ENCODE measurements at regions of chr6 and their contacts with region 1.

Region 1: GRCh38 chr6:85678602-85679444 is 36.1 kb upstream of the SYNCRIP start:
- DNase-seq: peak; percentile 99
- H3K4me3 ChIP-seq: peak overlapping the region; percentile 87 to 99 (median 96)
- H3K27ac ChIP-seq: peak overlapping the region; percentile 72
- H3K4me1 ChIP-seq: peaks cover 29% of the 10 kb centered on the region
- H3K27me3 ChIP-seq: no peaks in the 10 kb centered on the region
- CTCF ChIP-seq: peak in 1 of 2 donors; percentile 9
- POLR2A ChIP-seq: peak; percentile 100

Region 2: DNA sequence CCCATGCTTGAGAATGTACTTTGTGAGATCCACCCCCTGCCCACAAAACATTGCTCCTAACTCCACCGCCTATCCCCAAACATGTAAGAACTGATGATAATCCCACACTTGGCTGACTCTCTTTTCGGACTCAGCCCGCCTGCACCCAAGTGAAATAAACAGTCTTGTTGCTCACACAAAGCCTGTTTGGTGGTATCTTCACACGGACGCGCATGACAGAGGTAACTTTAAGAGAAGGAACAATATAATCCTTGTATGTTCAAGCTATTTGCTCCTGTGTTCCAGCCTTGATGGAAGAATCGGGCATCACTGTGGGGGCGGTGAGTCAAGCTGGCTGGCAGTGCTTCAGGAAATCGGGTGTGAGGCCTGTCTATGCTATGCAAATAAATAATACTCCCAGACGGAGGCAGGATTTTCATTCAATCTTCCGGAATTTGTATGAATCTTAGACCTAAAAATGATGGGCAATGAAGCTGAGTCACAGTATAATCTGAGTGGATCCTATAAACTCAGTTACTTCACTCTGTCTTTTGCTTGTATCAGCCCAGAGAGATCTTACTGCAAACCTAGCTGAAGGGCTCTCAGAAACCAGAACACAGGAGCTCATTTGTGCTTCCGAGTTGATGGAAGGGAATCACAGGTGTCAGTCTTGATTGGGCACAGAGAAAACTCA is 274.2 kb before region 1 on chr6:
- CTCF ChIA-PET with region 1: no interaction called
- POLR2A ChIA-PET with region 1: interaction called, 3 read pairs
- dilution Hi-C with region 1: no loop called
- intact Hi-C with region 1: loop called (anchors 1 kb)
- DNase-seq: peak; percentile 93
- H3K4me3 ChIP-seq: peak overlapping the region in 1 of 3 experiments; percentile 14
- H3K27ac ChIP-seq: peak overlapping the region; percentile 94
- H3K4me1 ChIP-seq: peaks cover 55% of the 10 kb centered on the region
- H3K27me3 ChIP-seq: no peaks in the 10 kb centered on the region
- CTCF ChIP-seq: no peak
- POLR2A ChIP-seq: peak; percentile 43

Region 3: GRCh38 chr6:85593438-85594196 is 85.2 kb before region 1 on chr6 and contains the start of gene SNX14:
- CTCF ChIA-PET with region 1: no interaction called
- POLR2A ChIA-PET with region 1: interaction called, 21 read pairs
- dilution Hi-C with region 1: no loop called
- intact Hi-C with region 1: loop called (anchors 2 kb)
- DNase-seq: peak; percentile 97
- H3K4me3 ChIP-seq: peak within 1 kb of the TSS; percentile 80 to 96 (median 92)
- H3K27ac ChIP-seq: peak within 1 kb of the TSS; percentile 82
- H3K4me1 ChIP-seq: peaks cover 16% of the 10 kb centered on the region
- H3K27me3 ChIP-seq: no peaks in the 10 kb centered on the region
- CTCF ChIP-seq: peak in 1 of 2 donors; percentile 2
- POLR2A ChIP-seq: peak; percentile 61
- total RNA-seq, gene SNX14: 64.9 and 74.3 TPM in 2 replicates

Region 4: GRCh38 chr6:85628353-85628752 is 50.5 kb before region 1 on chr6:
- CTCF ChIA-PET with region 1: no interaction called
- POLR2A ChIA-PET with region 1: interaction called, 31 read pairs
- dilution Hi-C with region 1: no loop called
- intact Hi-C with region 1: loop called (anchors 10 kb)
- DNase-seq: no peak
- H3K4me3 ChIP-seq: no peak overlapping the region
- H3K27ac ChIP-seq: no peak overlapping the region
- H3K4me1 ChIP-seq: no peaks in the 10 kb centered on the region
- H3K27me3 ChIP-seq: no peaks in the 10 kb centered on the region
- CTCF ChIP-seq: no peak
- POLR2A ChIP-seq: no peak

Region 5: GRCh38 chr6:85650606-85651005 is 28.2 kb before region 1 on chr6:
- CTCF ChIA-PET with region 1: interaction called, 78 read pairs
- POLR2A ChIA-PET with region 1: interaction called, 372 read pairs
- dilution Hi-C with region 1: no loop called
- intact Hi-C with region 1: no loop called
- DNase-seq: no peak
- H3K4me3 ChIP-seq: no peak overlapping the region
- H3K27ac ChIP-seq: no peak overlapping the region
- H3K4me1 ChIP-seq: no peaks in the 10 kb centered on the region
- H3K27me3 ChIP-seq: peaks cover 0 to 2% of the 10 kb centered on the region in 2 experiments
- CTCF ChIP-seq: no peak
- POLR2A ChIP-seq: no peak

Region 6: DNA sequence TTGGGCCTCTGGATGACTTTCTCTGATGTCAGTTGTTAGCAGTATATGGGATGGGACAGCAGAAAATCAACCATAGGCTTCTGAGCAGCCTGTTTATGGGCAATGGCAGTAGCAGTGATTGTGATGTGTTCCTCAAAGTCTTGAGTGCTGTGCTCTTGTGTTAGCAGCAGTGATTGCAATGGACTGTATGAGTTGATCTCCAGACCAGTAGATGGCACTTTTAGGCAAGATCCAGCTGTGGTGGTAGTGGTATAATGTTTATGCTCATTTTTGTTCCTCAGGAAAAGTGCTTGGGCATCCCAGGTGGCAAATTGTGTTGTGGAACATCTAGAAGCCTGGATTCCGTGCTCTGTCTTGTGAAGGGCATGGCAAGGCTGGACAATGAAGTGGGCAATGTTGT is 145.5 kb after region 1 on chr6:
- CTCF ChIA-PET with region 1: no interaction called
- POLR2A ChIA-PET with region 1: no interaction called
- dilution Hi-C with region 1: no loop called
- intact Hi-C with region 1: no loop called
- DNase-seq: no peak
- H3K4me3 ChIP-seq: no peak overlapping the region
- H3K27ac ChIP-seq: no peak overlapping the region
- H3K4me1 ChIP-seq: no peaks in the 10 kb centered on the region
- H3K27me3 ChIP-seq: no peaks in the 10 kb centered on the region
- CTCF ChIP-seq: no peak
- POLR2A ChIP-seq: no peak